Activated naive CD4-positive, alpha-beta T cell treated with anti-CD3 and anti-CD28 coated beads for 36 hours (primary cell): ENCODE measurements at regions of chr15 and their contacts with region 1.

Region 1: GRCh38 chr15:66293419-66294156 is at the start of gene DIS3L:
- DNase-seq: peak; percentile 66
- H3K4me3 Mint-ChIP-seq: peak within 1 kb of the TSS; percentile 84
- H3K27ac Mint-ChIP-seq: peak within 1 kb of the TSS; percentile 92
- H3K4me1 Mint-ChIP-seq: peaks cover 38% of the 10 kb centered on the region
- H3K27me3 Mint-ChIP-seq: no peaks in the 10 kb centered on the region
- total RNA-seq, gene DIS3L: 24.0 to 24.6 TPM

Region 2: DNA sequence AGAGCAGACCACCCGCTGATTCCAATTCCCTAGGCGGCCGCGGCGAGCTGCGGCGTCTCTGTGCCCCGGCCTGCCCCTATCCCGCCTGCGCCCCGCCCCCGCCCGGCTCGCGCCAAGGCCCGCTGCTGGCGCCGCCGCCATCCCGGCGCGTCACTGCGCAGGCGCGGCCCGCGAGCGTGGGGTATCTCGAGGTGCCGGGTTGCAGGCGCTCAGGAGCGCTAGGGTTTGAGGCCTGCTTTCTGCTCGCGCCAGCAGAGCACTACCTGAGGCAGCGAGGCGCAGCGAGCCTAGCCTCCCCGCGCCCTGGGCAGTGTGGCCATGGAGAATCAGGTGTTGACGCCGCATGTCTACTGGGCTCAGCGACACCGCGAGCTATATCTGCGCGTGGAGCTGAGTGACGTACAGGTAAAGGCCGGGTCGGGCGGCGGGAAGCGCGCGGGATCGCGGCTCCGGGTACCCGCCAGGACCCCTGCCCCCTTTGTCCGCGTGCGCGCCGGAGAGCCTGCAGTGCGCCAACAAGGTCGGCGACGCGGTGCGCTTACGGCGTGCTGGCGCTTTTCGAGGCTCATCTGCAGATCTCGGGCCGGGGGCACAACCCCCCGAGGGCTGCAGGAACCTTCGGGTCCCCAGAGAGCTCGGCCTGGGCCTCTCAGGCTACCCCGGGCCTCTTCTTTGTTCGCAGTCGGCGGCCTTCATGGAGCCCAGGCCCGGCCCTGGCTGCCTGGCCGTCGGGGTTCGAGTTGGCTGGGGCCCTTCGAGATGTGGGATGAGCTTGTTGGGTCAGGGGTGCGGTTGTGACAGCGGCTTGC is 763.1 kb before region 1 on chr15 and contains the start of gene HACD3:
- CTCF ChIA-PET with region 1: interaction called, 3 read pairs
- intact Hi-C with region 1: loop called (anchors 5 kb)
- DNase-seq: peak; percentile 89
- H3K4me3 Mint-ChIP-seq: peak within 1 kb of the TSS; percentile 83
- H3K27ac Mint-ChIP-seq: peak within 1 kb of the TSS; percentile 69
- H3K4me1 Mint-ChIP-seq: peaks cover 32% of the 10 kb centered on the region
- H3K27me3 Mint-ChIP-seq: no peaks in the 10 kb centered on the region
- total RNA-seq, gene HACD3: 29.1 to 30.1 TPM